Activated T-helper 1 cell treated with anti-CD3 and anti-CD28 coated beads, Interleukin-12 subunit alpha, Interleukin-12 subunit beta, Interleukin-2, Interleukin-4 antibody, amounts not matched to agents 30 ng/mL and 10 ng/mL and 1 ng/mL, durations not matched to agents 14 hours and 24 hours and 36 hours (primary cell): ENCODE measurements at regions of chrX and their contacts with region 1.

Region 1: DNA sequence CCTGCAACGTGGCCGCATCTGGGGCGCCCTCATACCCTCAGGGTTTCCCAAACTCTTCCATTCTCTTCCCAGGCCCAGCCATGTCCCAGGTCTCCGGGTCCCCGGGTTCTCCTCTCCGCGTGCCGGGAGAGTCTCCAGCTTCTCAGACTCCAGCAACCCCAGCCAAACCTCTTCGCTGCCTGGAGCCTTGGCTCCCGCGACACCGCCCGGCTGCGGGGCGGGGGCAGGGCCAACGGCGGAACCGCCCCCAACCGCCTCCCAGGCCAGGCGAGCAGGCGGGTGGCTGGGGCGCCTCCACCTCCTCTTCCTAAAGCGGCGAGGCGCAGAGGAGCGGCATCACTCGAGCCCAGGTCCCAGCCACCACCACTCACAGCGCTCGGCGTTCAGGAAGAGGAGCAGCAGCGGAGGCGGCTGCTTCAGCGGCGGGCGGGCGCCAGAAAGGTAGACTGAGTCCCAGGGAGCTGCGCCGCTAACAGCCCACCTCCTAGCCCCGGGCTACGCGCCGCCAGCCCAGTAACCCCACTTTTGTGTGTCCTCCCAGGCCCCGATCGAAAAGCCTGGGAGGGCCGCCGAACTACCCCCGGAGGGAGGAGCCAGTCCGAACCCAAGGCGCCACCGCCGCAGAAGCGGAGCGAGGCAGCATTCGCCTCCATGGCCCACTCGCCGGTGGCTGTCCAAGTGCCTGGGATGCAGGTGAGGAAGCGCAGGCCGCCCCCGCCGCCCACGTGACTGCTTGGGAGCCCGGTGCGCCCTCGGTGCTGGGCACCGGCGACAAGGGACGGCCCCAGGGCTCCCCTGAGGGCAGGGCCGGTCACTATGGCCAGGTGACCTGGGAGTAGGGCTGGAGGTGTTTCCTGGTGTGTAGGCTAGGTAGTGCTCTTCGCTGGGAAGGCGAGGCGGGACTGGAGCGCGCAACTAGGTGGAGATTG is at the start of gene STK26:
- DNase-seq: peak; percentile 75
- H3K4me3 Mint-ChIP-seq: peak within 1 kb of the TSS; percentile 94
- H3K27ac Mint-ChIP-seq: peak within 1 kb of the TSS; percentile 92
- H3K4me1 Mint-ChIP-seq: peaks cover 30% of the 10 kb centered on the region
- H3K27me3 Mint-ChIP-seq: no peaks in the 10 kb centered on the region
- total RNA-seq, gene STK26: 57.1 and 59.3 TPM in 2 replicates

Region 2: DNA sequence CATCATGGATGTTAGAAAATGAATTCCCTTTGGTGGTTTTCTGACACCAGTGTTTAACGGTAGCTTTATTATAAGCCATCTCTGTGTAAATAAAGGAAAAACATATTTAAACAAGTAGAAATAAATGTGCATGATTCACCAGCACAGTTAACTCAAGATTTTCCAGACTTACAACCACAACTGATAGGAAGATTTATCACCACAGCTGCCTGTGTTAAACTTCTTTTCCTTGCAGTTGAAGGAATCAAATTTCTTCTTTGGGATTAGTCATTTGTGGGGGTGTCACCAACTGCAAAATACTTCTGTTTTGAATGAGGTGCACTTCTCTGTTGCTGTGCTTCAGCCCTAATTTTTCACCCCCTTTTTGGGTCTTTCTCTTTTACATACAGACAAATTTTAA is 128.2 kb before region 1 on chrX:
- intact Hi-C with region 1: loop called (anchors 5 kb)
- DNase-seq: no peak
- H3K4me3 Mint-ChIP-seq: no peak overlapping the region
- H3K27ac Mint-ChIP-seq: no peak overlapping the region
- H3K4me1 Mint-ChIP-seq: no peaks in the 10 kb centered on the region
- H3K27me3 Mint-ChIP-seq: peaks cover 2% of the 10 kb centered on the region

Region 3: DNA sequence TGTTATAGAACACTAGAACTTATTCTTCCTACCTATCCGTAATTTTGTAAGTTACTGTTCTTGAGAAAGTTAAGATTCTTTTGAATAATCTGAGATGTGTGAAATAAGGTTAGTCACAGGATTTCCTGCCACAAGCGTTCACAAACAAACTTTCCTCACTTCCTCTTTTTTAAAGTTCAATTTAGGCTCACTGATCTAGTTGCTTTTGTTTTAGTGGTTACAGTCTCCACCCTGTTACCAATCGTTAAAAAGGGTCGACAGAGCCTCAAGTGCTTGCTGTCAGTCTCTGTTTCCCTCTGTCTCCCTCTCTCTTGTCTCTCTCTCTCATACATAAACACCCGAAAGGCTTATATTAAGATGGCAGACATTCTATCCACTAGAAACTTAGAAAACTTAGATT is 36.0 kb before region 1 on chrX:
- intact Hi-C with region 1: loop called (anchors 2 kb)
- DNase-seq: peak; percentile 2
- H3K4me3 Mint-ChIP-seq: peak overlapping the region; percentile 68
- H3K27ac Mint-ChIP-seq: peak overlapping the region; percentile 91
- H3K4me1 Mint-ChIP-seq: peaks cover 30% of the 10 kb centered on the region
- H3K27me3 Mint-ChIP-seq: no peaks in the 10 kb centered on the region

Region 4: GRCh38 chrX:132001127-132001526 is 22.1 kb before region 1 on chrX:
- intact Hi-C with region 1: loop called (anchors 2 kb)
- DNase-seq: no peak
- H3K4me3 Mint-ChIP-seq: no peak overlapping the region
- H3K27ac Mint-ChIP-seq: no peak overlapping the region
- H3K4me1 Mint-ChIP-seq: peaks cover 18% of the 10 kb centered on the region
- H3K27me3 Mint-ChIP-seq: peaks cover 1% of the 10 kb centered on the region

Region 5: DNA sequence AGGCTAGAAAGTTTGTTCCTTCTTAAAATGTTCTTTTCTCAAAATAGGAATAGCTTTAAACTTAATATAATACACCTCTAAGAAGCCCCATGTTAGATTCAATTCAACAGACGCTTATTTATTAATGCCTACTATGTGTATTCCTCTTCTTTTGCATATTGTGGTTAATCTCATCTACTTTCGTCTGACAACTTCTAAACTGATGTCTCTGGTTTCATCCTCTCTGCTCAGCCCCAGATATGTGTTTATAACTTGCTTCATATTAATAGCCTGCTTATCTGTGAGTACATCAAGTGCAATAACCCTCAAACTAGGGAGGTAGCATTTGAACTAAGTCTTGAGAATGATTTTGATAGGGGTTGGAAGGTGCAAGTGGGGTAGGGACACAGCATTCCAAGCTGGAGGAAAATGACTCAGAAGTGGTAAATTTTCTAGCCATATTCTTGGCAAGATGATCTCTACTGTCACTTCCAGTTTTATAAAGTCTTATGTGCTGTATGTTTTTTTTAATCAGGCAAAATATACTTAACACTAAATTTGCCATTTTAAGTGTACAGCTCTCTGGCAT is 36.8 kb after region 1 on chrX:
- intact Hi-C with region 1: loop called (anchors 5 kb)
- DNase-seq: no peak
- H3K4me3 Mint-ChIP-seq: no peak overlapping the region
- H3K27ac Mint-ChIP-seq: no peak overlapping the region
- H3K4me1 Mint-ChIP-seq: no peaks in the 10 kb centered on the region
- H3K27me3 Mint-ChIP-seq: no peaks in the 10 kb centered on the region

Region 6: GRCh38 chrX:132488819-132489577 is 465.8 kb after region 1 on chrX and contains the start of gene MBNL3:
- intact Hi-C with region 1: loop called (anchors 10 kb)
- DNase-seq: peak; percentile 45
- H3K4me3 Mint-ChIP-seq: peak within 1 kb of the TSS; percentile 95
- H3K27ac Mint-ChIP-seq: peak within 1 kb of the TSS; percentile 94
- H3K4me1 Mint-ChIP-seq: peaks cover 28% of the 10 kb centered on the region
- H3K27me3 Mint-ChIP-seq: peaks cover 7% of the 10 kb centered on the region
- total RNA-seq, gene MBNL3: 8.9 and 12.3 TPM in 2 replicates